ENCODE measurements at regions of chr15 and their contacts with region 1.

Region 1: GRCh38 chr15:72566973-72567372 is 87.5 kb upstream of the GOLGA6B start:
- DNase-seq: no peak
- H3K4me3 ChIP-seq: no peak overlapping the region
- H3K27ac ChIP-seq: no peak overlapping the region
- H3K4me1 ChIP-seq: no peaks in the 10 kb centered on the region
- H3K27me3 ChIP-seq: no peaks in the 10 kb centered on the region
- CTCF ChIP-seq: no peak
- POLR2A ChIP-seq: no peak

Region 2: GRCh38 chr15:73800662-73801345 is 1233.8 kb after region 1 on chr15:
- intact Hi-C with region 1: loop called (anchors 5 kb)
- DNase-seq: no peak
- H3K4me3 ChIP-seq: no peak overlapping the region
- H3K27ac ChIP-seq: peak overlapping the region; percentile 34
- H3K4me1 ChIP-seq: peaks cover 28% of the 10 kb centered on the region
- H3K27me3 ChIP-seq: no peaks in the 10 kb centered on the region
- CTCF ChIP-seq: no peak
- POLR2A ChIP-seq: no peak

Measured in vagina (tissue), 2 donors.